ENCODE measurements at regions of chr7 and their contacts with region 1.

Region 1: DNA sequence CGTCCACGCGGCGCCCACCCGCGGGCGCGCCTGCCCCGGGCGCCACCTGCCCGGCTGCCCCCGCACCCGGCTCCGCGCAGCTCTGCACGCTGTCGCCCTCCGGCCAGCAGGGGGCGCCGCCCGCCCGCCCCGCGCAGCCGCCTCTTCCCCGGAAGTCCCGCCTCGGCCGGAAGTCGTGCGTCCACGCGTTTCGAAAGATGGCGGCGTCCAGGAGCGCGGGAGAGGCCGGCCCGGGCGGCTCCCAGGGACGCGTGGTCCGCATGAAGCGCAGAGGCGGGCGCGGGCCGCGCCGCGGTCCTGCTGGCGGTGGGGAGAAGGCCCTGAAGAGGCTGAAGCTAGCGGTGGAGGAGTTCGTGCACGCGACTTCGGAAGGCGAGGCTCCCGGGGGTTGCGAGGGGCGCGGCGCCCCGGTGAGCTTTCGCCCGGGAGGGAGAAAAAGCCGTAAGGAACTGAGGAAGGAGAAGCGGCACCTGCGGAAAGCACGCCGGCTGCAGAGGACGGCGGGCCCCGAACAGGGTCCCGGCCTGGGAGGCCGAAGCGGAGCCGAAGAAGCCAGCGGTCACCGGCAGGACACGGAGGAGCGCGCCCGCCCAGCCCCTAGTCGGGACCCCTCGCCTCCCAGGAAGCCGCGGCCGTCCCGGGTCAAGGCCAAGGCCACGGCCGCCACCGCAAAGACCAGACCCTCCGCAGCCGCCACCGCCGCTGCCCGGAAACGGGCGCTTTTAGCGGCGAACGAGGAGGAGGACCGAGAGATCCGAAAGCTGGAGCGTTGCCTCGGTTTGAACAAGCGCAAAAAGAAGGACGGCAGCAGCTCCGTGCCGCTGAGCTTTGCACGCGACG is at the start of gene NOM1:
- DNase-seq: peak; percentile 92
- ATAC-seq: peak; percentile 93
- H3K4me3 Mint-ChIP-seq: peak within 1 kb of the TSS; percentile 95
- H3K27ac Mint-ChIP-seq: peak within 1 kb of the TSS; percentile 89
- H3K4me1 Mint-ChIP-seq: peaks cover 31% of the 10 kb centered on the region
- H3K27me3 Mint-ChIP-seq: peaks cover 22% of the 10 kb centered on the region
- total RNA-seq, gene NOM1: 28.1 to 28.8 TPM

Region 2: GRCh38 chr7:156743349-156743748 is 206.4 kb before region 1 on chr7:
- CTCF ChIA-PET with region 1: no interaction called
- POLR2A ChIA-PET with region 1: no interaction called
- DNase-seq: no peak
- ATAC-seq: no peak
- H3K4me3 Mint-ChIP-seq: no peak overlapping the region
- H3K27ac Mint-ChIP-seq: no peak overlapping the region
- H3K4me1 Mint-ChIP-seq: no peaks in the 10 kb centered on the region
- H3K27me3 Mint-ChIP-seq: no peaks in the 10 kb centered on the region

Region 3: GRCh38 chr7:156892821-156893706 is 56.7 kb before region 1 on chr7 and contains the start of gene LMBR1:
- CTCF ChIA-PET with region 1: interaction called, 18 read pairs
- POLR2A ChIA-PET with region 1: interaction called, 21 read pairs
- DNase-seq: peak; percentile 95
- ATAC-seq: peak; percentile 90
- H3K4me3 Mint-ChIP-seq: peak within 1 kb of the TSS; percentile 89
- H3K27ac Mint-ChIP-seq: peak within 1 kb of the TSS; percentile 94
- H3K4me1 Mint-ChIP-seq: peaks cover 53% of the 10 kb centered on the region
- H3K27me3 Mint-ChIP-seq: no peaks in the 10 kb centered on the region
- total RNA-seq, gene LMBR1: 49.7 to 51.2 TPM

Region 4: DNA sequence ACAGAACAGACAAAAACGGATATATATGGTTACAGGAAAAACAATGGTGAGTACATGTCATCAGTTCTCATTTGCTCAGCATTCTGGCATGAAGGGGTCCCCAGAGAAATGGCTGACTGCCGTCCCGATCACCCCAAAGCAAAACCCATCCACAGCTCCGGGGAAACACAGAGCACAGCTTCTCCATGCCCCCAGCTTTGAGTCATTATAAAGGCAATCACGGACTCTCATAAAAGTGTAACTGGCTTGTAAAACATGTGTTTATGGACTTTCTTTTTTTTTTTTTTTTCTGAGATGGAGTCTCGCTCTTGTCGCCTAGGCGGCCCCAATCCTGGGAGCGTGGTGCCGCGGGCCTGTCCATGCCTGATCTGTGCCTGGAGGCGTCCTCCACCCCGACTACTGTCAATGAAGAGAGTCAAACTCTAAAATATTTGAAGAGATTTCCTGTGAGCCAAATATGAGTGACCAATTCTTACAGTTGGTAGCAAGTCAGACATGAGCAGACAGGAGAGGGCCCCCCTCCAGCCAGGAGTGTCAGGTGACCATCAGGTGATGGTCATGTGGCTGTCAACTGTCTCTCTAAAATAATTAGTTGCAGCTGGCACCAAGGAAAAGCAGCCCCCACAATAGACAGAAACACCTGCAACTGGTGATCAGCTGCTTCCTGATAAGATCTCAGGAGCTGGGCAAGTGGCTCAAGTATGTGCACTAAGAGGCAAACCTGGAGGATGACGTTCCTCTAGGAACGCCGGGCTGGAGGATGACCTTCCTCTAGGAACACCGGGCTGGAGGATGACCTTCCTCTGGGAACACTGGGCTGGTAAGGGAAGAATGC is 22.0 kb before region 1 on chr7:
- CTCF ChIA-PET with region 1: interaction called, 11 read pairs
- POLR2A ChIA-PET with region 1: interaction called, 6 read pairs
- DNase-seq: no peak
- ATAC-seq: no peak
- H3K4me3 Mint-ChIP-seq: no peak overlapping the region
- H3K27ac Mint-ChIP-seq: no peak overlapping the region
- H3K4me1 Mint-ChIP-seq: peaks cover 34% of the 10 kb centered on the region
- H3K27me3 Mint-ChIP-seq: peaks cover 65% of the 10 kb centered on the region

Region 5: GRCh38 chr7:156969972-156970420 is 20.2 kb after region 1 on chr7:
- CTCF ChIA-PET with region 1: interaction called, 12 read pairs
- POLR2A ChIA-PET with region 1: no interaction called
- DNase-seq: no peak
- ATAC-seq: peak; percentile 49
- H3K4me3 Mint-ChIP-seq: no peak overlapping the region
- H3K27ac Mint-ChIP-seq: no peak overlapping the region
- H3K4me1 Mint-ChIP-seq: no peaks in the 10 kb centered on the region
- H3K27me3 Mint-ChIP-seq: no peaks in the 10 kb centered on the region

Region 6: GRCh38 chr7:156993021-156993924 is 43.5 kb after region 1 on chr7:
- CTCF ChIA-PET with region 1: no interaction called
- POLR2A ChIA-PET with region 1: no interaction called
- DNase-seq: no peak
- ATAC-seq: no peak
- H3K4me3 Mint-ChIP-seq: no peak overlapping the region
- H3K27ac Mint-ChIP-seq: no peak overlapping the region
- H3K4me1 Mint-ChIP-seq: no peaks in the 10 kb centered on the region
- H3K27me3 Mint-ChIP-seq: peaks cover 30% of the 10 kb centered on the region

Region 7: DNA sequence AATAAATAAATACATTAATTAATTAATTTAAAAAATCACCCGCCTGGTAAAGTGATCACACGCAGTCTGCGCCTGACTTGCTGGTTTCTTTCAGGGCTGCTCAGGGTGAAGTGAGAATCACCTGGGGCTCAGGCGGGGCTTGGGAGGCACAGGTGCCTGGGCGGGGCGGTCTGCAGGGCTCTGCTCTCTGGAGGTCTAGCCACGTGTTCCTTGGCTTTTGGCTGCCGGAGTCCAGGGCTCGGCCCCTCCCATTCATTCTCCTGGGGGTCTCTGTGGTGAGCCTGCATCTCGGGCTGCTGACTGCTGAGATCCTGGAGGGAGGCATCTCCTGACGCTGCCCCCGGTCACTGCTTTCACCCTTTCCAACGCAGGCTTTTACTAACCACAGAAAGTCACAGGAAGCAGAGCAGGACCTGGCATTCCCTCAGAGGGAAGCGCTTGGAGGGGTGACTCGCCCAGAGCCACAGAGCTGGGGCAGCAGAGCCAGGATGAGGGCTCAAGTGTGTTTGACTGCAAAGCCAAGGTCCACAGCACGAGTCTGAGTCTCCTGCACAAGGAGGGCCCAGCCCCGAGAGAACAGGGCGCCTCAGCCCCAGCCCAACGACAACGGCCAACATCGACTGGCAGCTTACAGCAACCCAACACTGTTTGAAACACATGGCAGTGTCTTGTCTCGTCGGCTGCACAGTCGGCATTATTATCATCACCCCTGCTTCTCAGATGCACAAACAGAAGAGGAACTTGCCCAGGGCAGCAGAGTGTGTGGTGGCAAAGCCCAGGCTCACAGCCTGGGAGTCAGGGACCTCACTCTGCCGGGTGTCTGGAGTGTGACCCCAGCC is 83.1 kb after region 1 on chr7:
- CTCF ChIA-PET with region 1: no interaction called
- POLR2A ChIA-PET with region 1: no interaction called
- DNase-seq: no peak
- ATAC-seq: no peak
- H3K4me3 Mint-ChIP-seq: no peak overlapping the region
- H3K27ac Mint-ChIP-seq: no peak overlapping the region
- H3K4me1 Mint-ChIP-seq: peaks cover 3% of the 10 kb centered on the region
- H3K27me3 Mint-ChIP-seq: peaks cover 25% of the 10 kb centered on the region

Measured in activated CD8-positive, alpha-beta T cell treated with anti-CD3 and anti-CD28 coated beads, Interleukin-2, amount 10 ng/mL, durations not matched to agents 7 days and 5 days (primary cell).